Right cardiac atrium (tissue), 5 donors: ENCODE measurements at regions of chr6 and their contacts with region 1.

Region 1: GRCh38 chr6:162736961-162737360 is 9.2 kb downstream of the PACRG start:
- DNase-seq: no peak
- ATAC-seq: peak in 1 of 2 donors; percentile 40
- H3K4me3 ChIP-seq: no peak overlapping the region
- H3K27ac ChIP-seq: no peak overlapping the region
- H3K4me1 ChIP-seq: no peaks in the 10 kb centered on the region
- H3K27me3 ChIP-seq: no peaks in the 10 kb centered on the region

Region 2: GRCh38 chr6:162151021-162151665 is 585.8 kb before region 1 on chr6:
- intact Hi-C with region 1: no loop called
- DNase-seq: no peak
- ATAC-seq: no peak
- H3K4me3 ChIP-seq: no peak overlapping the region
- H3K27ac ChIP-seq: no peak overlapping the region
- H3K4me1 ChIP-seq: no peaks in the 10 kb centered on the region
- H3K27me3 ChIP-seq: no peaks in the 10 kb centered on the region

Region 3: GRCh38 chr6:162177746-162178145 is 559.2 kb before region 1 on chr6:
- intact Hi-C with region 1: loop called in 1 of 4 experiments (anchors 10 kb)
- DNase-seq: peak in 1 of 3 donors; percentile 63
- ATAC-seq: peak; percentile 84 to 86
- H3K4me3 ChIP-seq: no peak overlapping the region
- H3K27ac ChIP-seq: no peak overlapping the region
- H3K4me1 ChIP-seq: no peaks in the 10 kb centered on the region
- H3K27me3 ChIP-seq: no peaks in the 10 kb centered on the region

Region 4: DNA sequence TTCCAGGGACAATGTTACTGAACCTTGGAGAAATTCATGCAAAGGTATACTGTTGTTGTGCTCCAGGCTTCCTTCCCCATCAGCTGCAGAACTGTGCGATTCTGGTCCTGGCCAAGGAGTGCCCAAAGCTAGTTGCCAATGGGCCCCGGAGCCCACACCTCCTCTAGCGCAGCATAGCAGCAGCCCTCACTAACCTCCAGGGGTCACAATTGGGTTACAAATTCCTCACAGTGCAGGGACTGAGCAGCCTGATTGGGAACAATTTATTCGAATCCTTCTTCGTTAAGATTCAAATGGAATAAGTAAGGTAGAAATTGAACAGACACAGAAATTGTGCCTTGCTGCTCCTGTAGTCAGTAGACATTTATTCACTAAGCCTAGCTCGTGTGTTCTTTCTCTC is 294.3 kb before region 1 on chr6:
- intact Hi-C with region 1: loop called in 1 of 4 experiments (anchors 10 kb)
- DNase-seq: no peak
- ATAC-seq: peak; percentile 68 to 83
- H3K4me3 ChIP-seq: no peak overlapping the region
- H3K27ac ChIP-seq: no peak overlapping the region
- H3K4me1 ChIP-seq: no peaks in the 10 kb centered on the region
- H3K27me3 ChIP-seq: no peaks in the 10 kb centered on the region